ENCODE measurements at regions of chr15 and their contacts with region 1.

Region 1: DNA sequence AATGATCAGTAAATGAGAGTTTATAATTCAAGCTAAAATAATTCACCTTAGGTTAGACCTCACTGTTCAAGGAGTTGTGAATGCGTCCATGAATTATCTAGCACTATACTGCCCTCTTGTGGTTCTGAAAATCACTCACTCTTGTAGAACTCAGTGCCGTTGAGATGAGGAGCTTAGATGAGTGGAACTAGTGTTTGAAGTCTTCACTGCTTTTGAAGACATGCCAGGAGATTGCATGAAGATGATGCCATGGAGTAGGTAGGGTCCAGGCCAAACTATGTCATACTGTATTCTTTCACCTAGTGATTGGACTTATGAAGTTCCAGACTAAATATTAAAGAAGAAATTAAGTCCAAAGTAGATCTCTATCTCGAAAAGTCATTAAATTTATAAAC is 28.8 kb downstream of the LYSMD4 start:
- DNase-seq: peak; percentile 30
- ATAC-seq: peak; percentile 72
- H3K4me3 Mint-ChIP-seq: no peak overlapping the region
- H3K27ac Mint-ChIP-seq: no peak overlapping the region
- H3K4me1 Mint-ChIP-seq: peaks cover 47% of the 10 kb centered on the region
- H3K27me3 Mint-ChIP-seq: no peaks in the 10 kb centered on the region
- CTCF ChIP-seq: peak; percentile 77

Region 2: GRCh38 chr15:99282121-99282520 is 422.3 kb before region 1 on chr15:
- CTCF ChIA-PET with region 1: interaction called, 85 read pairs
- POLR2A ChIA-PET with region 1: interaction called, 3 read pairs
- intact Hi-C with region 1: no loop called
- DNase-seq: no peak
- ATAC-seq: no peak
- H3K4me3 Mint-ChIP-seq: no peak overlapping the region
- H3K27ac Mint-ChIP-seq: no peak overlapping the region
- H3K4me1 Mint-ChIP-seq: peaks cover 42% of the 10 kb centered on the region
- H3K27me3 Mint-ChIP-seq: no peaks in the 10 kb centered on the region
- CTCF ChIP-seq: no peak

Region 3: GRCh38 chr15:99371180-99372103 is 333.0 kb before region 1 on chr15:
- CTCF ChIA-PET with region 1: interaction called, 18 read pairs
- POLR2A ChIA-PET with region 1: no interaction called
- intact Hi-C with region 1: no loop called
- DNase-seq: peak; percentile 4
- ATAC-seq: peak; percentile 84
- H3K4me3 Mint-ChIP-seq: no peak overlapping the region
- H3K27ac Mint-ChIP-seq: peak overlapping the region; percentile 74
- H3K4me1 Mint-ChIP-seq: peaks cover 22% of the 10 kb centered on the region
- H3K27me3 Mint-ChIP-seq: no peaks in the 10 kb centered on the region
- CTCF ChIP-seq: no peak

Region 4: GRCh38 chr15:99565299-99566156 is 138.9 kb before region 1 on chr15 and contains the start of gene MEF2A:
- CTCF ChIA-PET with region 1: interaction called, 29 read pairs
- POLR2A ChIA-PET with region 1: no interaction called
- intact Hi-C with region 1: loop called (anchors 5 kb)
- DNase-seq: peak; percentile 94
- ATAC-seq: peak; percentile 89
- H3K4me3 Mint-ChIP-seq: peak within 1 kb of the TSS; percentile 95
- H3K27ac Mint-ChIP-seq: peak within 1 kb of the TSS; percentile 98
- H3K4me1 Mint-ChIP-seq: peaks cover 27% of the 10 kb centered on the region
- H3K27me3 Mint-ChIP-seq: peaks cover 1% of the 10 kb centered on the region
- CTCF ChIP-seq: no peak
- total RNA-seq, gene MEF2A: 16.4 to 17.6 TPM

Region 5: GRCh38 chr15:99719096-99719541 is 14.7 kb after region 1 on chr15:
- CTCF ChIA-PET with region 1: interaction called, 46 read pairs
- POLR2A ChIA-PET with region 1: interaction called, 6 read pairs
- intact Hi-C with region 1: no loop called
- DNase-seq: no peak
- ATAC-seq: peak; percentile 50
- H3K4me3 Mint-ChIP-seq: no peak overlapping the region
- H3K27ac Mint-ChIP-seq: peak overlapping the region; percentile 30
- H3K4me1 Mint-ChIP-seq: peaks cover 38% of the 10 kb centered on the region
- H3K27me3 Mint-ChIP-seq: no peaks in the 10 kb centered on the region
- CTCF ChIP-seq: no peak

Measured in activated CD8-positive, alpha-beta T cell treated with anti-CD3 and anti-CD28 coated beads for 36 hours (primary cell).